SK-N-SH (cell line): ENCODE measurements at regions of chr19 and their contacts with region 1.

Region 1: DNA sequence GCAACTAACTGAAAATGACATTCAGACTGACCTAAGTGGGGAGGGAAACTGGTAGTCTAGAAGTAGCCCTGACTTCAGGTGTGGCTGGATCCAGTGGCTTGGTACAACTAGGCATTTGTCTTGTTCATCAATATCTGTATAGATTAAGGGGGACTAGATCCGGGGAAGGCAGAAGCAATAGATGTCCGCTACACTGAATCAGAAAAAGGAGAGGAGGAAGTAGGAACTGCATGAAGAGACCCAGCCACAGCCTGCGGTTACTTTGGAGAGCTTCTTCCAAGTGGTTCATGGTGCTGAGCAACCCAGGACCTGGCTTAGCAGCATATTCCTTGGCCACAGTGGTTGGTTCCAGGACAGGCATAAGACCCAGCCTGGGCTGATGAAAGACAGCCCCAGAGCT is 9.9 kb upstream of the PRODH2 start:
- DNase-seq: no peak
- H3K4me3 ChIP-seq: no peak overlapping the region
- H3K27ac ChIP-seq: no peak overlapping the region
- H3K4me1 ChIP-seq: no peaks in the 10 kb centered on the region
- H3K27me3 ChIP-seq: peaks cover 5% of the 10 kb centered on the region; the same call in 1 of the 2 replicates
- CTCF ChIP-seq: no peak
- EP300 ChIP-seq: no peak
- RAD21 ChIP-seq: no peak

Region 2: GRCh38 chr19:35549174-35549788 is 273.3 kb before region 1 on chr19:
- CTCF ChIA-PET with region 1: no interaction called
- POLR2A ChIA-PET with region 1: no interaction called
- DNase-seq: peak; percentile 83
- H3K4me3 ChIP-seq: no peak overlapping the region
- H3K27ac ChIP-seq: no peak overlapping the region
- H3K4me1 ChIP-seq: peaks cover 5 to 16% of the 10 kb centered on the region in 2 experiments; a peak in 2 of 4 replicates
- H3K27me3 ChIP-seq: no peaks in the 10 kb centered on the region
- CTCF ChIP-seq: peak; percentile 81
- EP300 ChIP-seq: no peak
- RAD21 ChIP-seq: peak; percentile 68

Region 3: DNA sequence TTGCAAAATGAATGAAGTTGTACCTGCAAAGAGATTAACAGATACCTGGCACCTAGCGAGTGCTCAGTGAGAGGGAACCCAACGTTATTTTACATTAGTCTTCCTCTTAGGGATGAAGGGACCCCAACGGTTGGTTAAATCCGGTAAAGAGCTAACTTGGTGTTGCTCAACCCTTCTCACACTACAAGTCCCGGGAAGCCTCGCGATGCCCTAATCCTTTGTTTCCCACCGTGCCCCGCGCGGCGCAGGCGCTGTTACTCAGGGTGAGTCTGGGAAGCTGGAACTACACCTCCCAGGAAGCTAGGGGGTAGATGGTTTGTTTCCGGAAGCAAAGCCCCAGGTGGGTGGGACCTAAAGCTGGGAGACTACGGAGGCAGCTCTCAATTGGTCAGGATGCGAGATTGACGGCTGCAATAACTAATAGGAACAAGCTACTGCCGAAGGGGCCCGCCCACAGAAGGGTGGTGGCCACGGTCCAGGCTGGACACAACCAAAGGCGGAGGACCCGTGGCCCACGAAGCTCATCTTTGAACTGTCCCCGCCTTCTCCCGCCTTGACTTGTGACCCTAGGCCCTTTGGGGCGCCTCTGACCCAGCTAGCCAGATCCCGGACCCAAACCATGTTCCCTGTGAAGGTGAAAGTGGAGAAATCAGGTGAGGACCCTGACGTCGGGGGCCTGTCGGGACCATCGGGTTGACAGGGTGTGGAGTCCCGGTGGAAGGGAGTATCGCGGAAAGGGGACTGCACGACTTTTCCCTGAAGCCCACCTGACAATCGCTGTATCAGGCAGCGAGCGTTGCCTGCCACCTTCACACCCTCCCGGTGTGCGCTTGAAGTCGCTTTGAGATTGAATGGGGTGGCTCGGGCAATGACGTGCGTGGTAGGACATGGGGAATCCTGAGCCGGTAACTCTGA is 74.2 kb before region 1 on chr19 and contains the start of gene LIN37:
- CTCF ChIA-PET with region 1: interaction called, 11 read pairs
- POLR2A ChIA-PET with region 1: interaction called, 4 read pairs
- DNase-seq: peak; percentile 93
- H3K4me3 ChIP-seq: peak within 1 kb of the TSS; percentile 88 to 99
- H3K27ac ChIP-seq: peak within 1 kb of the TSS; percentile 52 to 58; a peak in 3 of 4 replicates
- H3K4me1 ChIP-seq: peaks cover 13 to 21% of the 10 kb centered on the region in 2 experiments; a peak in 3 of 4 replicates
- H3K27me3 ChIP-seq: no peaks in the 10 kb centered on the region
- CTCF ChIP-seq: no peak
- EP300 ChIP-seq: no peak
- RAD21 ChIP-seq: no peak
- polyA plus RNA-seq, gene LIN37: 21.1 and 25.2 TPM in 2 replicates